Endothelial cell of umbilical vein (primary cell): ENCODE measurements at regions of chr1 and their contacts with region 1.

Region 1: DNA sequence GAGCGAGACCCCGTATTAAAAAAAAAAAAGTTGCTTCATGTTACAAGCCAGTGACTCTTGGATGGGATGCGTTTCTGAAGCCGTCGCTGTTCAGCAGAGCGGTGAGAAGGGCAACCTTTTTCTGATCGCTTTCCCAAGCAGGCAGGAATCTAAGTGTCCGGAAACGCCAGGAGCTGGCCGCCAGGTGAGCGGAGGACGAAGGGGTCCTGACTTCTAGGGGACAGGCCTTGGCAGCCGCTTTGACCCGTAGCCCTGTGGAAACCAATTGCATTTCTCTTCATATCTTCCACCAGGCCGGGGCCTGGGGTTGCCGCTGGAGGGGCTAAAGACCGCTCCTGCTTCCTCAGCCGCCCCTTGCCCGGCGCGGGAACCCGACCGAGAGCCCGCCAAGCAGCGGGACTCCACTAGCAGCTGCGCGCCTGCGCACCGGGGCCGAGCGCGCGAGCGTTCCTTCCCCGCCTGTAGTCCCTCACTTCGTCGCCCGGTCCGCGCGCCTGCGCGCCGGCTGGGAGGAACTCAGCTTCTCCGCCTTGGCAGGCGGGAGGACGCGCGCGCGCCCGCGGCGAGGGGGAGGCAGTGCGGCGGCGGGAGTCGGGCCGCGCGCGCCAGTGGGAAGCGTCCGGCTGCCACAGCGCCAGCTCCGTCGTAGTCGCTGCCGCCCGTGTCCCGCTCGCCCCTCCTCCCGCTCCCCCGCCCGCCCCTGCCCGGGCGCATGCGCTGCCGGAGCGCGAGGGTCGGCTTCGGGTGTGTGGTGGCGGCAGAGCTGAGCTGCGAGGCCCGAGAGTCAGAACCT is at the start of gene SPEN:
- DNase-seq: peak; percentile 97
- H3K4me3 ChIP-seq: peak within 1 kb of the TSS; percentile 71 to 100 (median 99)
- H3K27ac ChIP-seq: peak within 1 kb of the TSS; percentile 62
- H3K4me1 ChIP-seq: peaks cover 25% of the 10 kb centered on the region
- H3K27me3 ChIP-seq: no peaks in the 10 kb centered on the region
- CTCF ChIP-seq: no peak
- POLR2A ChIP-seq: peak; percentile 54
- total RNA-seq, gene SPEN: 40.3 and 44.4 TPM in 2 replicates

Region 2: GRCh38 chr1:15617175-15617880 is 230.0 kb before region 1 on chr1 and contains the start of gene DDI2:
- CTCF ChIA-PET with region 1: no interaction called
- POLR2A ChIA-PET with region 1: no interaction called
- dilution Hi-C with region 1: no loop called
- intact Hi-C with region 1: loop called (anchors 10 kb)
- DNase-seq: peak; percentile 98
- H3K4me3 ChIP-seq: peak within 1 kb of the TSS; percentile 54 to 87 (median 75)
- H3K27ac ChIP-seq: peak within 1 kb of the TSS; percentile 56
- H3K4me1 ChIP-seq: peaks cover 27% of the 10 kb centered on the region
- H3K27me3 ChIP-seq: no peaks in the 10 kb centered on the region
- CTCF ChIP-seq: no peak
- POLR2A ChIP-seq: peak; percentile 64
- total RNA-seq, gene DDI2: 35.2 and 35.9 TPM in 2 replicates

Region 3: DNA sequence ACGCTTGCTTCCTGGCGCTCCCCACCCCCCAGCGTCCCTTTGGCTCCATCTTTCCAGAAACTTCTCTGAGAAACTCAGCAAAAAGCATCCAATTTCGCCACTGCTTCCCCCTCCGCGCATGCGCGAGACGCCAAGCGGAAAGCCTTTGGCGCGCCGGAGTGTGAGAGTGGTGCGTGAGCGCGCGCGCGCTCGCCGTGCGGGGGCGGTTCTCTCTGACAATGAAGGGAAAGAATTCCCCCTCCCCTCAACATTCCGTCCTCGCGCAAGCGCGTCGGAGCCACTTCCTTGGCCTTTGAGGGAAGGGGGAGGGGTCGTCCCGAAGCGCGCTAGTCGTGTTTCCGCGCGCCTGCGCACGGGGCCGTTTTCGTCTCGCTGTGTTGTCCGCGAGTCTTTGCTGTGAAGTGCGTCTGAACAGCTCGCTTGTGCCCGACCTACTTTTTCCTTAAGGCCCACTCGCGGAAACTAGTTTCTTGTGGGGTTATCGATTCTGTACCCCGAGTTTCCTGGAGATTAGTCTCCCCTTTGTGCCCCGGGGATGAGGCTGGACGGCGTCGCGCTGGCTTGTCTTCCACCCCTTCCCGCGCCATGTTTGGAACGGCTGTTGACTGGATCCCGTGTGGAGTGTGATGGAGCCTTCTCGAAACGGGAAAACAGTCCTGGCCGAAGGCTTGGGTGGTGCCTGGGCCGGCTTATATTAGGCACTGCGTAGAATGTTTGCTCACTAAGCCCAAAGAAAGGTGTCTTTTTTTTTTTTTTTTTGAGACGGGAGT is 11.4 kb before region 1 on chr1:
- CTCF ChIA-PET with region 1: interaction called, 7 read pairs
- POLR2A ChIA-PET with region 1: interaction called, 9 read pairs
- dilution Hi-C with region 1: no loop called
- intact Hi-C with region 1: loop called (anchors 1 kb)
- DNase-seq: peak; percentile 100
- H3K4me3 ChIP-seq: peak overlapping the region in 2 of 3 experiments; percentile 58 to 66
- H3K27ac ChIP-seq: peak overlapping the region; percentile 95
- H3K4me1 ChIP-seq: peaks cover 3% of the 10 kb centered on the region
- H3K27me3 ChIP-seq: no peaks in the 10 kb centered on the region
- CTCF ChIP-seq: no peak
- POLR2A ChIP-seq: peak; percentile 85

Region 4: DNA sequence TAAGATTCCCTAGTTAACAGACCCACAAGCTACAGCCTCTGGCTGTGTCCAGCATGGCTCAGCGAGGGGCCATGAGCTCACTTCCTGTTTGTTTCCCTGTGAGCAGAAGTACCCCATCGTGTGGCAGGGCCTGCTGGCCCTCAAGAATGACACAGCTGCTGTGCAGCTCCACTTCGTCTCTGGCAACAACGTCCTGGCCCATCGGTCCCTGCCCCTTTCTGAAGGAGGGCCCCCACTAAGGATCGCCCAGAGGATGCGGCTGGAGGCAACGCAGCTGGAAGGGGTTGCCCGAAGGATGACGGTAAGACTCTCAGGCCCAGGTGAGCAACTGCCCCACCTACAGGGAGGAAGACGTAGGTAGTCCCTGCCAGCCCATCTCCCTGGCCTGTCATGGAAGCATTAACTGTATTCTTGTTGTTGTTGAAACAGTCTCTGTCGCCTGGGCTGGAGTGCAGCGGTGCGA is 90.4 kb after region 1 on chr1:
- CTCF ChIA-PET with region 1: interaction called, 3 read pairs
- POLR2A ChIA-PET with region 1: no interaction called
- dilution Hi-C with region 1: no loop called
- intact Hi-C with region 1: loop called (anchors 1 kb)
- DNase-seq: peak; percentile 75
- H3K4me3 ChIP-seq: no peak overlapping the region
- H3K27ac ChIP-seq: peak overlapping the region; percentile 72
- H3K4me1 ChIP-seq: peaks cover 26% of the 10 kb centered on the region
- H3K27me3 ChIP-seq: no peaks in the 10 kb centered on the region
- CTCF ChIP-seq: peak in 1 of 2 donors; percentile 46
- POLR2A ChIP-seq: no peak